ENCODE measurements at regions of chr1 and their contacts with region 1.

Region 1: GRCh38 chr1:226195144-226195543 is 8.6 kb upstream of the ACBD3 start:
- DNase-seq: no peak
- H3K4me3 ChIP-seq: no peak overlapping the region
- H3K27ac ChIP-seq: no peak overlapping the region
- H3K4me1 ChIP-seq: no peaks in the 10 kb centered on the region
- H3K27me3 ChIP-seq: no peaks in the 10 kb centered on the region
- CTCF ChIP-seq: no peak
- POLR2A ChIP-seq: no peak

Region 2: DNA sequence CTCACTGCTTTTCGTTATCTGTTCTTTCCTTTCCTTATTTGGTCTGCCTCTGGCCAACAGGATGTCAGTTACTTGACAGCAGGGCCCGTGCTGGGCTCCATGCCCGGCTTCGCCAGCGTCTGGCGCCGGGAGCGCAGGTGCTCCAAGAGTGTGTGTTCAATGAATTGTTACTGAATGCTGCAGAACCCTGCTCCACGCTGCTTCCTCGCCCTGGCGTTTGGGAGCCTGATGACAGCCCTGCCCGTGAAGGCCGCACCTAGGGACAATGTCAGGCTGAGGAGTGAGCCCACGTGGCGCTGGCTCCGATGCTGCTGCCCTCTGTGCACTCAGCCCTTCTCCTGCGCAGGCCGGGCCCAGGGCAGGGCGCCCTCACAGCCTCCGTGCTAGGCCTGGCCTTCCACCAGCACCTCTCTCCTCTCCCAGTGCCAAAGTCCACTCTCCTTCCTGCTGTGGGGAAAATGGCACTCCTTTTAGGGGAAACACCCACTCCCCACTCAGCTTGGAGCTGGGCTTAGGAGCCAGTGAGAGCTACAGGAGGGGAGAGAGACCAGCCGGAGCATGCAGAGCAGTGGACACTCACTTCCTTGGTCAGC is 60.0 kb before region 1 on chr1:
- intact Hi-C with region 1: loop called (anchors 10 kb)
- DNase-seq: peak; percentile 68
- H3K4me3 ChIP-seq: no peak overlapping the region
- H3K27ac ChIP-seq: no peak overlapping the region
- H3K4me1 ChIP-seq: peaks cover 12% of the 10 kb centered on the region
- H3K27me3 ChIP-seq: no peaks in the 10 kb centered on the region
- CTCF ChIP-seq: no peak
- POLR2A ChIP-seq: no peak

Measured in testis (tissue), 5 donors.